ENCODE measurements at regions of chr14 and their contacts with region 1.

Region 1: GRCh38 chr14:75301666-75302325 is 23.2 kb downstream of the FOS start:
- DNase-seq: no peak
- H3K27ac ChIP-seq: peak overlapping the region; percentile 15; the same call in 1 of the 2 replicates
- CTCF ChIP-seq: no peak

Region 2: DNA sequence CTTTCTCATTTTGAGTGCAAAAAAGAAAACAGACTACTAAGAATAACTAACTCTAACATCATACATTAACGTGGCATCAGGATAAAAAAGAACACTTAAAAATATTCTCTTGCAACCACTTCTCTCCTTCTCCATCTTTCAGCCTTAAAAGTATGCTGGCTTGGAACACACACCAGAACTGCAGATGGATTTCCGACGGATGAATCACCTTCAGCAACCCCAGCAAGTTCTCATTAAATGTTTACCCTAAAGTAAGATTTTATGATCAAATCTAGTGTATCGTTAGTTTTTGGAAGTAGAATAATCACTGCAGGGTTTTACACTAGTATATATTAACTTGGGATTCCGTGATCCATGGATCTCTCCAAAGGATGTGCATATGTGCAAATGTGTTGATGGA is 176.2 kb before region 1 on chr14:
- CTCF ChIA-PET with region 1: interaction called, 4 read pairs
- POLR2A ChIA-PET with region 1: interaction called, 11 read pairs
- DNase-seq: peak; percentile 33
- H3K27ac ChIP-seq: no peak overlapping the region
- CTCF ChIP-seq: no peak

Measured in RWPE1 (cell line).